Mammary epithelial cell (primary cell): ENCODE measurements at regions of chr4 and their contacts with region 1.

Region 1: DNA sequence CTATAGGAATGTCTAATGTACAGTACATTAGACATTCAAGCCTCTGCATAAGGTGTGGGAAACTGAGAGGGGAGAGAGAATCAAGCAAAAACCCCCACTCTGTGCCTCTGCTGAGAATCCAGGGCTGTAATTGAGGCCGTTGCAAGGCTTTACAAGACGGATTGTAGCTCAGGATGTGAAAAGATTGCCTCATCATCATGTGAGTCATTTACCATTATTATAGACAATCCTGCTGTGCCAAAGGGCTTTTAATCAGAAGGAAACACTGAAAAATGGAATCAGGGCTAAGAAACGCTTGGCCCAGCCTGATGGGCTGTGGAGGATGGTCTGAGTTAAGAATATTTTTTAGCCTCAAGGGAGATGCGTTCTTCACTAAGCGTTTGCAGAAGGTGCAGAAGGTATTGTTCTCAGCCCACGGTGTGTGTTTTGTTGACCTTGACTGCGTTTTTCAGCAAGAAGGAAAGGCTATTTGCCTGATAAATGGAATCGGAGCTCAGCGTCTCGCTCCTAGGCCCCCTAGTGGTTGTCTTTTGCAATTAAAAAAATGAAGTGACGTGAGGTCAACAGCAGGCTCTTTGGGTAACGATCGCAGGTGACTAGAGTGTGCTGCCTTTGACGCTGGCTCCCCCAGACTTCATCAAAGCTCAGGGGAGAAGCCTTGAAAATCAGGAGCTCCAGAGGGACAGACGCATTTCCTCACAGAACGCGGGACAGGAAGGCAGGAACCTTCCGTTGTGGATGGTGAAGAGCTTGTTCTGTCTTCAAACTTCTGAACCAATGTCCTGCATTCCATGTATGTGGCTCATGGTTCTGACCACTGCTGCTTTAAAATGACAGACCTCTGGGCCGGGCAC is 18.1 kb upstream of the CHRNA9 start:
- DNase-seq: peak; percentile 88
- H3K4me3 ChIP-seq: peak overlapping the region; percentile 22 to 40 (median 26)
- H3K27ac ChIP-seq: peak overlapping the region; percentile 99
- H3K4me1 ChIP-seq: peaks cover 39% of the 10 kb centered on the region
- H3K27me3 ChIP-seq: no peaks in the 10 kb centered on the region
- CTCF ChIP-seq: peak; percentile 74 to 79

Region 2: DNA sequence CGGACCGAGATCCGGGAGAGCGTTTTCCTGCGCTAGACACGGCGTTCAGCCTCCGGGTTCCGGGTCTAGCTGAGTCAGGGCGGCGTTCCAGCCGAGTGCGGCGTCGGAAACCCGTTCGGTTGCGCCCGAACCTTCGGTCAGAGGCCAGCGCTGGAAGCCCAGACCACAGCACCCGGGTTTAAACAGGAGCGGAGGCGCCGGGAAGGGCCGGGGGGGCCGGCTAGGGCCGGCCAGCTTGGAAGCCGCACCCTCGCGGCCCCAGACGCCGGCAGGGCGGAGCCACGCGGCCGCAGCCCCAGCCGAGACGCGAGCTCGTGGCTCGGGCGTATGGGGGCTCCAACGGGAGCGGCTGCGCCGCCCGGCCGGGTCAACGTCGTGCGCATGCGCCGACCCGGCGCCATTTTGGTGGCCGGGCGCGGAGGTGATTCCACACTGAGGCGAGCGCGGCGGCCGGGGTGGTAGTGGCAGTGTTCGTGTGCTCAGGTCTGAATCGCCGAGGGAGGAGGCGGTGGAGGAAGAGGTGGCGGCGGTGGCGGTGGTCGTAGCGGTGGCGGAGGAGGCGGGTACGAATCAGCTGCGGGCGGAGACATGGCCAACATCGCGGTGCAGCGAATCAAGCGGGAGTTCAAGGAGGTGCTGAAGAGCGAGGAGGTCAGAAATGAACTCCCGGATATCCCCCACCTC is 619.1 kb before region 1 on chr4 and contains the start of gene UBE2K:
- CTCF ChIA-PET with region 1: no interaction called
- dilution Hi-C with region 1: no loop called
- in situ Hi-C with region 1: no loop called
- intact Hi-C with region 1: loop called (anchors 5 kb)
- DNase-seq: peak; percentile 88
- H3K4me3 ChIP-seq: peak within 1 kb of the TSS; percentile 84 to 97 (median 86)
- H3K27ac ChIP-seq: peak within 1 kb of the TSS; percentile 79
- H3K4me1 ChIP-seq: peaks cover 8% of the 10 kb centered on the region
- H3K27me3 ChIP-seq: no peaks in the 10 kb centered on the region
- CTCF ChIP-seq: no peak
- total RNA-seq, gene UBE2K: 23.3 to 105 TPM

Region 3: GRCh38 chr4:40149960-40150385 is 167.0 kb before region 1 on chr4:
- CTCF ChIA-PET with region 1: interaction called, 10 read pairs
- dilution Hi-C with region 1: no loop called
- in situ Hi-C with region 1: no loop called
- intact Hi-C with region 1: no loop called
- DNase-seq: peak; percentile 72
- H3K4me3 ChIP-seq: no peak overlapping the region
- H3K27ac ChIP-seq: no peak overlapping the region
- H3K4me1 ChIP-seq: no peaks in the 10 kb centered on the region
- H3K27me3 ChIP-seq: no peaks in the 10 kb centered on the region
- CTCF ChIP-seq: peak; percentile 72 to 79

Region 4: GRCh38 chr4:40173470-40173875 is 143.5 kb before region 1 on chr4:
- CTCF ChIA-PET with region 1: interaction called, 11 read pairs
- dilution Hi-C with region 1: no loop called
- in situ Hi-C with region 1: loop called (anchors 10 kb)
- intact Hi-C with region 1: no loop called
- DNase-seq: no peak
- H3K4me3 ChIP-seq: no peak overlapping the region
- H3K27ac ChIP-seq: no peak overlapping the region
- H3K4me1 ChIP-seq: no peaks in the 10 kb centered on the region
- H3K27me3 ChIP-seq: no peaks in the 10 kb centered on the region
- CTCF ChIP-seq: no peak

Region 5: GRCh38 chr4:40299704-40300336 is 17.2 kb before region 1 on chr4:
- CTCF ChIA-PET with region 1: no interaction called
- dilution Hi-C with region 1: no loop called
- in situ Hi-C with region 1: no loop called
- intact Hi-C with region 1: no loop called
- DNase-seq: peak; percentile 55
- H3K4me3 ChIP-seq: no peak overlapping the region
- H3K27ac ChIP-seq: no peak overlapping the region
- H3K4me1 ChIP-seq: peaks cover 8% of the 10 kb centered on the region
- H3K27me3 ChIP-seq: no peaks in the 10 kb centered on the region
- CTCF ChIP-seq: peak; percentile 14 to 48

Region 6: GRCh38 chr4:40594261-40595178 is 277.5 kb after region 1 on chr4:
- CTCF ChIA-PET with region 1: no interaction called
- dilution Hi-C with region 1: no loop called
- in situ Hi-C with region 1: no loop called
- intact Hi-C with region 1: no loop called
- DNase-seq: peak; percentile 45
- H3K4me3 ChIP-seq: no peak overlapping the region
- H3K27ac ChIP-seq: no peak overlapping the region
- H3K4me1 ChIP-seq: no peaks in the 10 kb centered on the region
- H3K27me3 ChIP-seq: no peaks in the 10 kb centered on the region
- CTCF ChIP-seq: no peak